ENCODE measurements at regions of chr2 and their contacts with region 1.

Region 1: DNA sequence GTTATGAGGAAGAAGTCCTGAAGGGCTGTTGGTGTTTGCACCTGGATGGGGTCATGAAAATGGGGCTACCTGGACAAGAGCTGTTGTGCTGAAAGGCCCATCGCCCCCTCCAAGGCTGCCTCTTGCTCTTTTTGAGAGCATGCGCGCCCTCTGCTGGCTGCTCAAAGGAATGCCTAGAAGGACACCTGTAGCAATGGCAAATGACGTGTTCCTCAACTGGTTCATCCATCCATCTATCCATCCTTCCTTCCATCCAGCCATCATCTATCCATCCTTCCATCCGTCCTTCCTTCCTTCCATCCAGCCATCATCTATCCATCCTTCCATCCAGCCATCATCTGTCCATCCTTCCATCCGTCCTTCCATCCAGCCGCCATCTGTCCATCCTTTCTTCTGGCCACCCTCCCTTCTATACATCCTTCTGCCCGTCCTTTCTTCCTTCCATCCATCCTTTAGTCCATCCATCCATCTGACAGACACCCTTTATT is 17.2 kb upstream of the RPL31 start:
- DNase-seq: peak; percentile 71 to 79
- ATAC-seq: peak; percentile 53 to 85 (median 68)
- H3K4me3 ChIP-seq: no peak overlapping the region
- H3K27ac ChIP-seq: peak overlapping the region in 2 of 10 donors; percentile 9 to 62
- H3K4me1 ChIP-seq: peaks cover 0 to 19% (median 0%) of the 10 kb centered on the region in 9 donors
- H3K27me3 ChIP-seq: no peaks in the 10 kb centered on the region
- CTCF ChIP-seq: peak; percentile 84 to 95 (median 93)

Region 2: DNA sequence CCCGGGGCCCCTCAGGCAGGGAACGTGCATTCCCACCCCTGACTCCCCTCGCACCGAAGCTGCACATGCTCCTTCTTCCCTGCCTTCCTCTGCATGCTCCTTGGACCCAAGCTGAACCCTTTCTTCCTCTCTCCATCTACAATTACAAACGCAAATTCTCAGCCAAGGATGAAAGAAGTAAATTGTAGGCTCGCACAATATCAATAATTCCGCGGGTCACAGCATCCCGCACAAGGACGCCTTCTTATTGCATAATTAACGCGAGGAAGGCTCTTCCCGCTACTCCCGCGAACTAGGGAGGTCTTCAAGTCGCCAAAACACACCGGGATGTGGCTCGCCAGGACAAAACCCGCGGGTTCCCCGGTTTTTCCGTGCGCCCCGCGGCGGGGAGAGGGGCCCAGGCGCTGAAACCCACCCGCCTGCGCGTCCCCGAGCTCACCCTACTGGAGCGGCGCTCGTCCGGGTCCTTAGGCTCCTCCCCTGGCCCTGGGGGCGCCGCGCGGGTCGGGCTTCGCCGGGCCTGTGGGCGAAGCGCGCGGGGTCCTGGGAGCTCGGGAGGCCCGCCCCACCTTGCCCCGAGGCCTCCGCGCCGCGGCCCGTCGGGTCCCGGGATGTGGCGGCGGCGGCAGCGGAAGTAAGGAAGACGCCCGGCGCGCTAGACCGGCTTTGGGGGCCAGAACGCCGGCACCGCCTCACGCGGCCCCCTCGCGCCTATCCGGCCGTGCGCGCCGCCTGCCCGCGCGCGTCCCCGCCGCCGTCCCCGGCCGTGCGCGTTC is 567.8 kb before region 1 on chr2 and contains the start of gene CHST10:
- intact Hi-C with region 1: loop called in 1 of 10 experiments (anchors 10 kb)
- DNase-seq: peak; percentile 57 to 67
- ATAC-seq: peak; percentile 92 to 96 (median 93)
- H3K4me3 ChIP-seq: peak within 1 kb of the TSS; percentile 68 to 97 (median 82)
- H3K27ac ChIP-seq: peak within 1 kb of the TSS; percentile 57 to 91 (median 86)
- H3K4me1 ChIP-seq: peaks cover 0 to 25% (median 19%) of the 10 kb centered on the region in 9 donors
- H3K27me3 ChIP-seq: peaks cover 0 to 8% (median 0%) of the 10 kb centered on the region in 7 donors
- CTCF ChIP-seq: no peak
- total RNA-seq, gene CHST10: 6.2 to 11.8 (median 9.5) TPM

Region 3: GRCh38 chr2:100610381-100610831 is 374.5 kb before region 1 on chr2:
- intact Hi-C with region 1: loop called (anchors 1 to 5 kb)
- DNase-seq: peak; percentile 59 to 66
- ATAC-seq: peak; percentile 61 to 85 (median 74)
- H3K4me3 ChIP-seq: no peak overlapping the region
- H3K27ac ChIP-seq: no peak overlapping the region
- H3K4me1 ChIP-seq: no peaks in the 10 kb centered on the region
- H3K27me3 ChIP-seq: no peaks in the 10 kb centered on the region
- CTCF ChIP-seq: peak; percentile 34 to 74 (median 65)

Region 4: DNA sequence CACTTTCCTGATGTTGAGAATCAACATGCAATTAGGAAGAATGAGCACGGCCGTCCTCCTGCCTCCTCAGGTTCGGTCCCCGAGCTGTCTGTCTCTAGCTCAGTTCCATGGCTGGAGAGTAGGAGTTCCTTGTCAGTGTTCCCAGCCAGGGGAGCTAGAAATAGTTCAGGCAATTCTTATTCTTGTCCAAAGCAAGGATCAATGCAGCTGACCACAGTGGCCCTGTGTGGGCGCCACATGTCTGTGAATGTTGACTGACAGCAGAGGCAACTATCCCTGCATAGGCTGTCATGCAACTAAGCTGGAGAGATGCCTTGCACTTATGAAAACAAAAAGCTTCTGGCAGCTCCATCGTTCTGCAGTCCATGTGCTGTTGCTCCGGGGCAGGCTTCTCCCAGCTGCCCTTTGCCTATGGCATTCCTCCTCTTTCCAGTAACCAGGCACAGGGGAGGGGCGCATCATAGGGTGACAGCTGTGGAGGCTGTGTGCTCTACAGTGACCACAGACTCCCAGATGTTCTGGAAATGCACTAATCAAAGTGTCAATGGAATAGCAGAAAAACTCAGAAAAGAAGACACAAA is 363.5 kb before region 1 on chr2:
- intact Hi-C with region 1: no loop called
- DNase-seq: no peak
- ATAC-seq: no peak
- H3K4me3 ChIP-seq: no peak overlapping the region
- H3K27ac ChIP-seq: no peak overlapping the region
- H3K4me1 ChIP-seq: no peaks in the 10 kb centered on the region
- H3K27me3 ChIP-seq: no peaks in the 10 kb centered on the region
- CTCF ChIP-seq: no peak

Region 5: GRCh38 chr2:100730346-100730745 is 254.6 kb before region 1 on chr2:
- intact Hi-C with region 1: loop called (anchors 1 to 2 kb)
- DNase-seq: peak; percentile 58 to 61
- ATAC-seq: peak; percentile 69 to 90 (median 80)
- H3K4me3 ChIP-seq: no peak overlapping the region
- H3K27ac ChIP-seq: no peak overlapping the region
- H3K4me1 ChIP-seq: peaks cover 4 to 14% (median 11%) of the 10 kb centered on the region in 9 donors
- H3K27me3 ChIP-seq: no peaks in the 10 kb centered on the region
- CTCF ChIP-seq: peak; percentile 23 to 84 (median 71)

Region 6: DNA sequence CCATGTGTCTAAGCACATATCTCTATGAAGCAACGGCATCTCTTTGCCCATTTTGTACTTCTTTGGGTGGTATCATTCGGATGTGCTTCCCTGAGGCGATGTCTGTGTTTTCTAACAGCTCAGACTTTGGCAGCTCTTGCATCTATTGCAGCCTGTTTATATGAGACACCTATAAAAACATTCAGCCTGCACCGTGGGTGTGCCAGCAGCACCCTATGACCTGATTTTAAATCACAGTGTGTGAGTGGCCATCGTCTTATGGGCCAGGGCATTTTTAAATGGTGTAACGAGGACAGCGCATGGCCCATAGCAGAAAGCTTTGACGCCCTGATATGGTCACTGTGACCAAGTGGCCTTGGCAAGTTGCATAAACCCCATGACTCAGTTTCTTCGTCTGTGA is 152.1 kb before region 1 on chr2:
- intact Hi-C with region 1: loop called in 2 of 10 experiments (anchors 10 kb)
- DNase-seq: no peak
- ATAC-seq: peak in 7 of 8 donors; percentile 42 to 77 (median 48)
- H3K4me3 ChIP-seq: no peak overlapping the region
- H3K27ac ChIP-seq: peak overlapping the region in 5 of 10 donors; percentile 15 to 49 (median 33)
- H3K4me1 ChIP-seq: peaks cover 12 to 56% (median 32%) of the 10 kb centered on the region in 9 donors
- H3K27me3 ChIP-seq: no peaks in the 10 kb centered on the region
- CTCF ChIP-seq: no peak

Region 7: DNA sequence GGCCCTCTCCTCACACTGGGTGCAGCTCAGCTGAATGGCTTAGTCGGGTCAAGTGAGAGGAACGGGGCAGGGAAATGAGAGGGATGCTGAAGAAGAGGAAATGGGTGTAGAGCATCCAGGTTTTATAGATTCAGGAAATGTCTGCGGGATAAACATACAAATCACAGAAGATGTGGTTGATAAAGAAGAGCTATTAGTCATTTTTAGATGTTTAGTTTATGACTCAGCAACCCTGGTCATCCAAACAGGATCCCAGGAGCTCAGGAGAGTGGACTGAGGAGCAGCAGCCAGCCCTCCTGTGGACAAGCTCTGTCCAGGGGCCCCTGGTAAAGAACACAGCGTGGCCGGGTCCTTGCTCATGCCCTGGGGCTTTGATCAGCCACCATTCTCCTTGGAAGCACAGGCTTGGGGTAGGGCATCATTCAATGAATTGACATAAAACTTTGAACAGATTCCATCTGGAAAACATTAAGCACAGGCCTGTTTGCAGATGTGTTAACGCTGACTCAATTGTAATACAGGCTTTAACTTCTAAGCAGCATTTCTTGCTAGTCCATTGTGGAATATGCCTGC is 82.0 kb before region 1 on chr2:
- intact Hi-C with region 1: loop called in 1 of 10 experiments (anchors 10 kb)
- DNase-seq: no peak
- ATAC-seq: peak in 5 of 8 donors; percentile 35 to 59 (median 35)
- H3K4me3 ChIP-seq: no peak overlapping the region
- H3K27ac ChIP-seq: peak overlapping the region in 2 of 10 donors; percentile 47 to 83
- H3K4me1 ChIP-seq: peaks cover 12 to 53% (median 27%) of the 10 kb centered on the region in 9 donors
- H3K27me3 ChIP-seq: no peaks in the 10 kb centered on the region
- CTCF ChIP-seq: peak in 1 of 9 donors; percentile 4

Measured in heart right ventricle (tissue), 16 donors.